GM23248 (cell line): ENCODE measurements at regions of chr3 and their contacts with region 1.

Region 1: GRCh38 chr3:32502118-32502945 is at the start of gene CMTM6:
- DNase-seq: peak; percentile 93
- H3K4me3 ChIP-seq: peak within 1 kb of the TSS; percentile 84
- H3K27ac ChIP-seq: peak within 1 kb of the TSS; percentile 91
- H3K4me1 ChIP-seq: peaks cover 12% of the 10 kb centered on the region
- H3K27me3 ChIP-seq: no peaks in the 10 kb centered on the region
- total RNA-seq, gene CMTM6: 91.7 and 104 TPM in 2 replicates

Region 2: GRCh38 chr3:32667122-32667521 is 164.8 kb after region 1 on chr3:
- in situ Hi-C with region 1: loop called (anchors 10 kb)
- DNase-seq: no peak
- H3K4me3 ChIP-seq: no peak overlapping the region
- H3K27ac ChIP-seq: no peak overlapping the region
- H3K4me1 ChIP-seq: no peaks in the 10 kb centered on the region
- H3K27me3 ChIP-seq: peaks cover 12% of the 10 kb centered on the region; the same call in 1 of the 2 replicates